A549 (cell line): ENCODE measurements at regions of chrX and their contacts with region 1.

Region 1: GRCh38 chrX:130060122-130061069 is 49.9 kb downstream of the ELF4 start:
- DNase-seq: peak; percentile 77 to 88
- ATAC-seq: peak; percentile 92 to 95
- H3K4me3 ChIP-seq: peak overlapping the region; percentile 60
- H3K27ac ChIP-seq: peak overlapping the region; percentile 94 to 95
- H3K4me1 ChIP-seq: peaks cover 5% of the 10 kb centered on the region; the same call in 1 of the 3 replicates
- CTCF ChIP-seq: peak; percentile 82
- EP300 ChIP-seq: no peak
- POLR2A ChIP-seq: no peak
- RAD21 ChIP-seq: peak; percentile 75 to 86

Region 2: DNA sequence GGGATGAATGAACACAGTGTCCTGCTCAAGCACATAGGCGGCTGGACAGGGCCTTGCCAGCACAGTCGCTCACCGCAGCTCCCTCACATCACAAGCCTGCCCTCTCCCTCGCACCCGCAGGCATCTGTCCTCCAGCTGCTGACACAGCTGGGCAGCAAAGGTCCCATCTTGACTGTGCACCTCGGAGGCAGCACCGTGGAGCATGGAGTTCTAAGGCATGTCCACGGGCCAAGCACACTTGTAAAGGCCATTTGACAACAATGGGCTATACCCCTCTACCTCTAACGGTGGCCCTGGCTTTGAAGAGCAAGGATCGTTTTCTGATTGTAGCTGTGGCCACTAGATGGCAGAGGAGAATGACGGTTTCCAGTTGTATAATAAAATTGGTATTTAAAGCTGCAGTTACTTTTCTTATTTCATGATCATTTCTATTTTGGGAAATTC is 459.4 kb before region 1 on chrX:
- CTCF ChIA-PET with region 1: interaction called, 21 read pairs
- POLR2A ChIA-PET with region 1: no interaction called
- DNase-seq: peak; percentile 27 to 30
- ATAC-seq: peak; percentile 55 to 64; a peak in 5 of 6 replicates
- H3K4me3 ChIP-seq: no peak overlapping the region
- H3K27ac ChIP-seq: no peak overlapping the region
- H3K4me1 ChIP-seq: peaks cover 4% of the 10 kb centered on the region; the same call in 1 of the 3 replicates
- CTCF ChIP-seq: peak; percentile 54
- EP300 ChIP-seq: no peak
- POLR2A ChIP-seq: no peak
- RAD21 ChIP-seq: peak; percentile 31 to 56; a peak in 4 of 5 replicates

Region 3: GRCh38 chrX:129925305-129926092 is 134.9 kb before region 1 on chrX:
- CTCF ChIA-PET with region 1: interaction called, 32 read pairs
- POLR2A ChIA-PET with region 1: interaction called, 7 read pairs
- DNase-seq: peak; percentile 45 to 82
- ATAC-seq: peak; percentile 73 to 87
- H3K4me3 ChIP-seq: no peak overlapping the region
- H3K27ac ChIP-seq: peak overlapping the region in 1 of 2 experiments; percentile 2; a peak in 1 of 6 replicates
- H3K4me1 ChIP-seq: peaks cover 12% of the 10 kb centered on the region
- CTCF ChIP-seq: peak; percentile 67
- EP300 ChIP-seq: no peak
- POLR2A ChIP-seq: no peak
- RAD21 ChIP-seq: peak; percentile 61 to 74

Region 4: GRCh38 chrX:130024127-130024526 is 36.3 kb before region 1 on chrX:
- CTCF ChIA-PET with region 1: interaction called, 16 read pairs
- POLR2A ChIA-PET with region 1: no interaction called
- DNase-seq: peak; percentile 40 to 56
- ATAC-seq: peak; percentile 43 to 89; a peak in 5 of 6 replicates
- H3K4me3 ChIP-seq: no peak overlapping the region
- H3K27ac ChIP-seq: no peak overlapping the region
- H3K4me1 ChIP-seq: no peaks in the 10 kb centered on the region
- CTCF ChIP-seq: no peak
- EP300 ChIP-seq: no peak
- POLR2A ChIP-seq: no peak
- RAD21 ChIP-seq: no peak

Region 5: GRCh38 chrX:130071611-130072344 is 11.4 kb after region 1 on chrX:
- CTCF ChIA-PET with region 1: interaction called, 32 read pairs
- POLR2A ChIA-PET with region 1: no interaction called
- DNase-seq: no peak
- ATAC-seq: 0 out of 6 replicates have a peak, but pooled peaks of 1 of the 2 experiments have one; percentile 34
- H3K4me3 ChIP-seq: no peak overlapping the region
- H3K27ac ChIP-seq: no peak overlapping the region
- H3K4me1 ChIP-seq: no peaks in the 10 kb centered on the region
- CTCF ChIP-seq: no peak
- EP300 ChIP-seq: no peak
- POLR2A ChIP-seq: no peak
- RAD21 ChIP-seq: no peak